HCT116 (cell line): ENCODE measurements at regions of chr17 and their contacts with region 1.

Region 1: DNA sequence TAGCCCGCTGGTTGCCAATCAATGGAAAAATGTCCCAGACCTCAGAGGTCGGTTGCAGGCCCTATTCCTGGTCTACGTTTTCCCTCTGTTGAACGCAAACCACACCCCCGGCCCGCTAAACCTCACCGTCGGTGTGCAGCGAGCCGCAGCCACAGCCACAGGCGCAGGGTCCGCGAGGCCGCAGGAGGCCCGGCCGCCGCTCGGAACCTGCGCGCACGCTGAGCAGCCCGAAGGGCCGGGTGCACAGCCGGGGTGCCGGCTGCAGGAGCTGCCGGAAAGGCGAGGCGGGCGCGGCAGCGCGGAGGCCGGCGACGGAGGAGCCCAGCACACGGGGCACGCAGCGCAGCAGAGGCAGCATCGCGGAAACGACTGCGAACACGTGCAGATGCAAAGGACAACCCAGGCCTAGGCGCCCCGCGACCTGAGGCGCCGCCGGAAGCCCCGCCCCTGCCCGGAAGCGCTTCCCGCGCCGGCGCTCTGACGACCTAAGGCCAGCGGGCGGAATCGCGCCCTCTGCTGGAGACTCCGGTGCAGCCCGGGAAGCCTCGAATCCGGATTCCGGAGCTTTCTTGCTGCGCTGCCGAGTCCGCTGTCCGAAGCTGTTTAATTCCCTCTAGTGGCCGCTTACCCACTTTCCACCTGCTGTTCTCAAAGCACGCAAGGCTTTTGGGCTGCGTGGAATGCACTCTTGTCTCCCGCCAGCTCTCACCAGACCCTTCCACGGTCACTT is at the start of gene C1QBP:
- DNase-seq: peak; percentile 91
- ATAC-seq: peak; percentile 91
- H3K4me3 ChIP-seq: peak within 1 kb of the TSS; percentile 81 to 100
- H3K27ac ChIP-seq: peak within 1 kb of the TSS; percentile 92
- H3K4me1 ChIP-seq: peaks cover 13 to 18% of the 10 kb centered on the region in 2 experiments
- H3K27me3 ChIP-seq: no peaks in the 10 kb centered on the region
- CTCF ChIP-seq: peak; percentile 93 to 99 (median 96)
- POLR2A ChIP-seq: peak; percentile 68
- RAD21 ChIP-seq: peak; percentile 89
- total RNA-seq, gene C1QBP: 524 TPM

Region 2: GRCh38 chr17:5078106-5079028 is 360.5 kb before region 1 on chr17 and contains the start of gene ZFP3:
- CTCF ChIA-PET with region 1: no interaction called
- POLR2A ChIA-PET with region 1: no interaction called
- RAD21 ChIA-PET with region 1: no interaction called
- intact Hi-C with region 1: no loop called
- DNase-seq: no peak
- ATAC-seq: no peak
- H3K4me3 ChIP-seq: no peak within 1 kb of the TSS
- H3K27ac ChIP-seq: no peak within 1 kb of the TSS
- H3K4me1 ChIP-seq: no peaks in the 10 kb centered on the region
- H3K27me3 ChIP-seq: no peaks in the 10 kb centered on the region
- CTCF ChIP-seq: no peak
- POLR2A ChIP-seq: no peak
- RAD21 ChIP-seq: no peak
- total RNA-seq, gene ZFP3: 0.05 TPM

Region 3: DNA sequence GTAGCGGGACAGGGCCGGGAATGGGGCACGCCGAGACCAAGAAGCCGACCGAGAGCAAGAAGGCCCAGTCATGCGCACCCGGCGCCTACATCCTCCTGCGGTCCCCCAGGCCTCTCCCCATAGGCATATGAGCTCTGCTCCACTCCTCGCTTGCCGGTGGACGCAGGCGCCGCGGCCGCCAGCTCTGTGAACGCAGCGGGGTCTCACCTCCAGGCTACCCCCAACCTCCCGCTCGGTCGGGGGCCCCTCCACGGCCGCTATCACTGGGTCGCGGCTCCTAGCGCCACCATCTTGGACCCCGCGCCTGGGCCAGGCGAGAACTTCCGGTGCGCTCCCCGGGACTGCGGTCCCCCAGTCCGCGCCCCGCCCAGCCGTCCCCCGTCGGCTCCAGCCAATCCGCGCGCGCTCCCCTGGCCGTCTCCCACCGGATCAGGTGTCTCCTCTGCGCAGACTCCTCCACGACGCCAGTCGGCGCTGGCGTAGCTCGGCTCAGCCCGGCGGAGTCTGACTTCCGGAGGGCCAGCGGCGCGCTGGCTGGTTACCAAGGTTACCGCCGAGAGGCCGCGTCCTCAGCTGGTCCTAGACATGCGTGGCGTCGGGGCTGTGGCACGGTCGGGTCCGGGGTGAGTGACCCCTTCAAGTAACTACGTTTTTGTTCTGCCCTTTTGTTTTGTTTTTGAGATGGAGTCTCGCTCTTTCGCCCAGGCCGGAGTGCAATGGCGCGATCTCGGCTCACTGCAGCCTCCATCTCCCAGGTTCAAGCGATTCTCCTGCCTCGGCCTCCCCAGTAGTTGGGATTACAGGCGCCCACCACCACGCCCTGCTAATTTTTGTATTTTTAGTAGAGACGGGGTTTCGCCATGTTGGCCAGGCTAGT is 247.1 kb before region 1 on chr17 and contains the start of gene ZNF594:
- CTCF ChIA-PET with region 1: no interaction called
- POLR2A ChIA-PET with region 1: no interaction called
- RAD21 ChIA-PET with region 1: no interaction called
- intact Hi-C with region 1: loop called (anchors 10 kb)
- DNase-seq: peak; percentile 93
- ATAC-seq: peak; percentile 99
- H3K4me3 ChIP-seq: peak within 1 kb of the TSS; percentile 90 to 94
- H3K27ac ChIP-seq: peak within 1 kb of the TSS; percentile 84
- H3K4me1 ChIP-seq: peaks cover 0 to 17% of the 10 kb centered on the region in 2 experiments; a peak in 2 of 4 replicates
- H3K27me3 ChIP-seq: no peaks in the 10 kb centered on the region
- CTCF ChIP-seq: peak; percentile 58 to 77 (median 65)
- POLR2A ChIP-seq: no peak
- RAD21 ChIP-seq: 0 out of 2 replicates have a peak, but pooled peaks have one; percentile 18
- total RNA-seq, gene ZNF594: 8.3 TPM

Region 4: GRCh38 chr17:5413682-5414081 is 25.2 kb before region 1 on chr17:
- CTCF ChIA-PET with region 1: interaction called, 14 read pairs
- POLR2A ChIA-PET with region 1: interaction called, 11 read pairs
- RAD21 ChIA-PET with region 1: no interaction called
- intact Hi-C with region 1: no loop called
- DNase-seq: peak; percentile 73
- ATAC-seq: peak; percentile 77
- H3K4me3 ChIP-seq: no peak overlapping the region; a peak in 1 of 4 replicates
- H3K27ac ChIP-seq: peak overlapping the region; percentile 38; the same call in 1 of the 2 replicates
- H3K4me1 ChIP-seq: peaks cover 10 to 24% of the 10 kb centered on the region in 2 experiments
- H3K27me3 ChIP-seq: no peaks in the 10 kb centered on the region
- CTCF ChIP-seq: no peak
- POLR2A ChIP-seq: no peak
- RAD21 ChIP-seq: no peak

Region 5: DNA sequence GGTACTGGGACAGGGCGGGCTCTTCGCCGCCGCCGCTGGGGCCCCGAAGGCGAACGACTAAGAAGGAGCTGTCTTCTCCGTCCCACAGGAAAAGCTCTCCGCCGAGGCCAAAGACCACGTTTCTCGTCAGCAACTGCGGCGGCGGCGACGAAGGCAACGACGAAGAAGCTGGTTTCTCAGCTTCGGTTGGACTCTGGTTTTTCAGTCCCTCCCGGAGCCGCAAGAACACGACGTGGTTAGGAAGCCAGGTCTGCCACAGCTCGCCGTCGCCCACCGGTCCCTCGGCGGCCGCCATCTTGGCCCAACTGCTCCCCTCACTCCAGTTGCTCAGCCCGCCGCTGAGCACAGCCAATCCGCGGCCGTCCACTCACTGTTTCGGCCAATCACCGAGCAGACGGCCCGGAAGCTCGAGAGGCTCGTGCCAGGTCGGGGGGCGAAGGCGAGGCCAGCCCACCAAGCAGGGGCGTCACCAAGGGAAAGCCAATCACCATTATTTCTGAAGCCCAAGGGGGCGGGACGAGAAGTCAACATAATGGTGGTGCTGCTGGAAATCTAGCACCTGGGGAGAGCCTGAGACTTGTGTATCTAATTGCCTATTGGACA is 19.4 kb before region 1 on chr17 and contains the start of gene NUP88:
- CTCF ChIA-PET with region 1: interaction called, 12 read pairs
- POLR2A ChIA-PET with region 1: interaction called, 6 read pairs
- RAD21 ChIA-PET with region 1: no interaction called
- intact Hi-C with region 1: no loop called
- DNase-seq: peak; percentile 95
- ATAC-seq: peak; percentile 95
- H3K4me3 ChIP-seq: peak within 1 kb of the TSS; percentile 85 to 98
- H3K27ac ChIP-seq: peak within 1 kb of the TSS; percentile 80
- H3K4me1 ChIP-seq: peaks cover 19 to 33% of the 10 kb centered on the region in 2 experiments
- H3K27me3 ChIP-seq: no peaks in the 10 kb centered on the region
- CTCF ChIP-seq: no peak
- POLR2A ChIP-seq: peak; percentile 77
- RAD21 ChIP-seq: no peak
- total RNA-seq, gene NUP88: 93.2 TPM